Activated B cell treated with CpG ODN at 0.5 μM for 24 hours (primary cell): ENCODE measurements at regions of chr1 and their contacts with region 1.

Region 1: GRCh38 chr1:173409613-173410012 is 67.5 kb upstream of the PRDX6 start:
- DNase-seq: no peak
- ATAC-seq: peak; percentile 25
- H3K4me3 Mint-ChIP-seq: peak overlapping the region; percentile 81
- H3K27ac Mint-ChIP-seq: peak overlapping the region; percentile 95
- H3K4me1 Mint-ChIP-seq: peaks cover 91% of the 10 kb centered on the region
- H3K27me3 Mint-ChIP-seq: no peaks in the 10 kb centered on the region
- CTCF ChIP-seq: no peak

Region 2: GRCh38 chr1:173020138-173020750 is 389.4 kb before region 1 on chr1:
- CTCF ChIA-PET with region 1: no interaction called
- POLR2A ChIA-PET with region 1: no interaction called
- intact Hi-C with region 1: loop called (anchors 5 kb)
- DNase-seq: no peak
- ATAC-seq: peak; percentile 84
- H3K4me3 Mint-ChIP-seq: peak overlapping the region; percentile 56
- H3K27ac Mint-ChIP-seq: peak overlapping the region; percentile 90
- H3K4me1 Mint-ChIP-seq: peaks cover 61% of the 10 kb centered on the region
- H3K27me3 Mint-ChIP-seq: no peaks in the 10 kb centered on the region
- CTCF ChIP-seq: no peak

Region 3: GRCh38 chr1:173255214-173255813 is 154.3 kb before region 1 on chr1:
- CTCF ChIA-PET with region 1: interaction called, 14 read pairs
- POLR2A ChIA-PET with region 1: interaction called, 4 read pairs
- intact Hi-C with region 1: no loop called
- DNase-seq: no peak
- ATAC-seq: no peak
- H3K4me3 Mint-ChIP-seq: no peak overlapping the region
- H3K27ac Mint-ChIP-seq: no peak overlapping the region
- H3K4me1 Mint-ChIP-seq: peaks cover 15% of the 10 kb centered on the region
- H3K27me3 Mint-ChIP-seq: no peaks in the 10 kb centered on the region
- CTCF ChIP-seq: peak; percentile 74

Region 4: GRCh38 chr1:173429471-173430402 is 20.1 kb after region 1 on chr1:
- CTCF ChIA-PET with region 1: interaction called, 63 read pairs
- POLR2A ChIA-PET with region 1: interaction called, 10 read pairs
- intact Hi-C with region 1: no loop called
- DNase-seq: peak; percentile 54
- ATAC-seq: peak; percentile 87
- H3K4me3 Mint-ChIP-seq: peak overlapping the region; percentile 71
- H3K27ac Mint-ChIP-seq: peak overlapping the region; percentile 87
- H3K4me1 Mint-ChIP-seq: peaks cover 25% of the 10 kb centered on the region
- H3K27me3 Mint-ChIP-seq: no peaks in the 10 kb centered on the region
- CTCF ChIP-seq: no peak

Region 5: DNA sequence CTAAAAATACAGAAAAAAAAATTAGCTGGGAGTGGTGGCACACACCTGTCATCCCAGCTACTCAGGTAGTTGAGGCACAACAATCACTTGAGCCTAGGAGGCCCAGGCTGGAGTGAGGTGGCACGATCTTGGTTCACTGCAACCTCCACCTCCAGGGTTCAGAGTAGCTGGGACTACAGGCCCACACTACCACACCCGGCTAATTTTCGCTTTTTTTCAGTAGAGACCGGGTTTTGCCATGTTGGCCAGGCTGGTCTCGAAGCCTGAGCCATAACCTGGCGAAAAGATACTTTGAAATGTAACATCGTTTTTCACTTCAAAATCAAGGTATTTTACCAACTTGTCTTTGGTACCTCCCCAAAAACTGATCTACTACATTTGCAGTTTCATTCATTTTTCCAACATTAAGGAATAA is 452.1 kb after region 1 on chr1:
- CTCF ChIA-PET with region 1: no interaction called
- POLR2A ChIA-PET with region 1: interaction called, 11 read pairs
- intact Hi-C with region 1: no loop called
- DNase-seq: no peak
- ATAC-seq: no peak
- H3K4me3 Mint-ChIP-seq: no peak overlapping the region
- H3K27ac Mint-ChIP-seq: peak overlapping the region; percentile 24
- H3K4me1 Mint-ChIP-seq: peaks cover 42% of the 10 kb centered on the region
- H3K27me3 Mint-ChIP-seq: no peaks in the 10 kb centered on the region
- CTCF ChIP-seq: no peak

Region 6: GRCh38 chr1:174159252-174160108 is 749.9 kb after region 1 on chr1 and contains the start of gene RABGAP1L:
- CTCF ChIA-PET with region 1: no interaction called
- POLR2A ChIA-PET with region 1: no interaction called
- intact Hi-C with region 1: loop called (anchors 2 kb)
- DNase-seq: peak; percentile 88
- ATAC-seq: peak; percentile 84
- H3K4me3 Mint-ChIP-seq: peak within 1 kb of the TSS; percentile 96
- H3K27ac Mint-ChIP-seq: peak within 1 kb of the TSS; percentile 99
- H3K4me1 Mint-ChIP-seq: peaks cover 72% of the 10 kb centered on the region
- H3K27me3 Mint-ChIP-seq: no peaks in the 10 kb centered on the region
- CTCF ChIP-seq: no peak
- total RNA-seq, gene RABGAP1L: 103 and 126 TPM in 2 replicates